T-cell (primary cell): ENCODE measurements at regions of chrX and their contacts with region 1.

Region 1: DNA sequence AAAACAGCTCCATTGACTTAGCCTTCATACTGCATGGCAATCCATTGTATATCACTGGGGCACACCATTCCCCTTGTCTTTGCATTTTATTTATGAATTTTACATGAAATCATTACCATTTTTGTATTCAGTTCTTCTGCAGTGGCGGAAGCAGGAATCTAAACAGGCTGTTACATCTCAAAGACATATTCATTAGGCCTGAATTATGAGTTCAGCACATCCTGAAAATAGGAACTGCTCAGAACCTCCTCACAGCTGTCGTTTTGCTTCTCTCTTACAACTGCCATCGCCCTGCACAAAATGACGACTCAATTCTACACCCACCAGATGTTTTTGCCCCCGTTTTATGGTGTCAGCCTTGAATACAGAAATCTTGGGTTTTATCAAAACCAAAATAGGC is 474.4 kb upstream of the MAGEB18 start:
- DNase-seq: no peak
- ATAC-seq: no peak
- H3K4me3 ChIP-seq: no peak overlapping the region
- H3K4me3 Mint-ChIP-seq: no peak overlapping the region
- H3K27ac ChIP-seq: no peak overlapping the region
- H3K27ac Mint-ChIP-seq: no peak overlapping the region
- H3K4me1 ChIP-seq: no peaks in the 10 kb centered on the region
- H3K4me1 Mint-ChIP-seq: no peaks in the 10 kb centered on the region
- H3K27me3 ChIP-seq: no peaks in the 10 kb centered on the region
- H3K27me3 Mint-ChIP-seq: peaks cover 0 to 7% of the 10 kb centered on the region in 2 donors

Region 2: DNA sequence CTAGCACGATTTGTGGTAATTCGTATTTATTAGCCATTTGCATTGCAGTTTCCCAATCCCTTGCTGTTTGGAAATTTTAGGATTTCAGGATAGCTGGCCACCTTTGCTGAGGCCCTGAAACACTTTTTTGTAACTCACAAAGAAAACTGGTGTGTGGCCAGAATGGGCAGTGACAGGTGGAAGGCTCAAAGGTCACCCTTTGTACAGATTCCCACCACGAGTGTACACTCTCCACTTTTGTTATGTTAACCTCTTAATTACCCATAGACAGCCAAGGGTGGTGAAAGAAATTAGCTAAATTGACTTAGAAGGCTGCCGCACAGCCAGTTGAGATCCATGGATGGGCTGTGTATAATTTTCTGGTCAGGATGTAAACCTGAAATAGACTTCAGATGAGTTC is 538.2 kb before region 1 on chrX:
- CTCF ChIA-PET with region 1: no interaction called
- POLR2A ChIA-PET with region 1: no interaction called
- DNase-seq: no peak
- ATAC-seq: no peak
- H3K4me3 ChIP-seq: no peak overlapping the region
- H3K4me3 Mint-ChIP-seq: no peak overlapping the region
- H3K27ac ChIP-seq: no peak overlapping the region
- H3K27ac Mint-ChIP-seq: no peak overlapping the region
- H3K4me1 ChIP-seq: no peaks in the 10 kb centered on the region
- H3K4me1 Mint-ChIP-seq: no peaks in the 10 kb centered on the region
- H3K27me3 ChIP-seq: no peaks in the 10 kb centered on the region
- H3K27me3 Mint-ChIP-seq: peaks cover 9 to 20% of the 10 kb centered on the region in 2 donors

Region 3: GRCh38 chrX:25507801-25508200 is 155.9 kb before region 1 on chrX:
- CTCF ChIA-PET with region 1: interaction called in 1 of 2 experiments, 15 read pairs
- POLR2A ChIA-PET with region 1: no interaction called
- DNase-seq: no peak
- ATAC-seq: no peak
- H3K4me3 ChIP-seq: no peak overlapping the region
- H3K4me3 Mint-ChIP-seq: no peak overlapping the region
- H3K27ac ChIP-seq: no peak overlapping the region
- H3K27ac Mint-ChIP-seq: no peak overlapping the region
- H3K4me1 ChIP-seq: no peaks in the 10 kb centered on the region
- H3K4me1 Mint-ChIP-seq: no peaks in the 10 kb centered on the region
- H3K27me3 ChIP-seq: no peaks in the 10 kb centered on the region
- H3K27me3 Mint-ChIP-seq: no peaks in the 10 kb centered on the region

Region 4: GRCh38 chrX:25650216-25650820 is 13.4 kb before region 1 on chrX:
- CTCF ChIA-PET with region 1: no interaction called
- POLR2A ChIA-PET with region 1: no interaction called
- DNase-seq: no peak
- ATAC-seq: no peak
- H3K4me3 ChIP-seq: no peak overlapping the region
- H3K4me3 Mint-ChIP-seq: no peak overlapping the region
- H3K27ac ChIP-seq: no peak overlapping the region
- H3K27ac Mint-ChIP-seq: no peak overlapping the region
- H3K4me1 ChIP-seq: no peaks in the 10 kb centered on the region
- H3K4me1 Mint-ChIP-seq: no peaks in the 10 kb centered on the region
- H3K27me3 ChIP-seq: no peaks in the 10 kb centered on the region
- H3K27me3 Mint-ChIP-seq: peaks cover 0 to 8% of the 10 kb centered on the region in 2 donors